ENCODE measurements at regions of chrX and their contacts with region 1.

Region 1: DNA sequence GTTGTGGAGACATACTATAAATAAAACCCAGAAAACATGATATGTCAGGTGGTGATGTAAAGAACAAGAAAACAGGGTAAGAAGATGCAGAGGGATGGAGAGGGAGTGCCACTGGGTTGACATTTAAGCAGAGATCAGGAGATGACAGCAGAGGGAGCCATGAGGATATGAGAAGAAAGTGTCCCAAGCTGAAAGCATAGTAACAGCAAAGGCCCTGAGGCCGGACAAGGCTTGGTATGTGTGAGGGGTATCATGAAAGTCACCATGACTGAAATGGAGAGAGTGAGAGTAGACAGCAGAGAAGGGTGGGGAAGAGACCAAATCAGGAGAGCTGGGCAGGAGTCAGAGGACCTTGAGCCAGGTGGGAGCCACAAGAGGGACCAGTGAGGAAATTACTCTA is 3.4 kb downstream of the GPKOW start:
- DNase-seq: no peak
- H3K4me3 ChIP-seq: no peak overlapping the region
- H3K27ac ChIP-seq: no peak overlapping the region
- H3K4me1 ChIP-seq: no peaks in the 10 kb centered on the region
- H3K27me3 ChIP-seq: no peaks in the 10 kb centered on the region
- CTCF ChIP-seq: no peak

Region 2: DNA sequence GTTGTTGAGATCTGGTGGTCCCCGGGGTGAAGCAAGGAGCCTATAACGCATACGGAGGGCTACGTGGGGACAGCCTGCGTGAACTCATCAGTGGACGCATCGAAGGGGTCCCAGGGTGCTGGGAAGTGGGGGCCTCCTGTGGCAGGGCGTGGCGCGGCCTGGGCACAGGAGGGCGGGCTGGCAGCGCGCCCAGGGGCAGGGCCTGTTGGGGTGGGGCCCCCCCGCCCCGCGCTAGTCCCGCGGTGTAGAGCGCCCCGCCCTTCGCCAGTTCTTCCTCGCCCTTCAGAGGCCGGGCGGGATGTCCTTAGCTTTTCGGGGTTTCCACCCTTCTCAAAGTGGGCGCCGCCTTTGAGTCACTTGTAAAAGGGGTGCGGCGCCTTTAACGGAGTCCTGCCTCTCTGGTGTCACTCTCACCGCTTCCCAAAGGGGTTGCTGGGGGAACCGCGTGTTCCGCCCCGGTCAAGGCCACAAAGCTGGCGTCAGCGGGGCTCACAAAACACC is 52.2 kb after region 1 on chrX:
- CTCF ChIA-PET with region 1: no interaction called
- POLR2A ChIA-PET with region 1: no interaction called
- intact Hi-C with region 1: loop called (anchors 5 kb)
- DNase-seq: peak; percentile 57 to 63
- H3K4me3 ChIP-seq: peak overlapping the region; percentile 56; the same call in 1 of the 2 replicates
- H3K27ac ChIP-seq: no peak overlapping the region
- H3K4me1 ChIP-seq: no peaks in the 10 kb centered on the region
- H3K27me3 ChIP-seq: no peaks in the 10 kb centered on the region
- CTCF ChIP-seq: no peak

Measured in PC-9 (cell line).